Activated CD4-positive, alpha-beta memory T cell treated with anti-CD3 and anti-CD28 coated beads, Interleukin-2, amount 10 ng/mL, durations not matched to agents 7 days and 5 days (primary cell): ENCODE measurements at regions of chr19 and their contacts with region 1.

Region 1: DNA sequence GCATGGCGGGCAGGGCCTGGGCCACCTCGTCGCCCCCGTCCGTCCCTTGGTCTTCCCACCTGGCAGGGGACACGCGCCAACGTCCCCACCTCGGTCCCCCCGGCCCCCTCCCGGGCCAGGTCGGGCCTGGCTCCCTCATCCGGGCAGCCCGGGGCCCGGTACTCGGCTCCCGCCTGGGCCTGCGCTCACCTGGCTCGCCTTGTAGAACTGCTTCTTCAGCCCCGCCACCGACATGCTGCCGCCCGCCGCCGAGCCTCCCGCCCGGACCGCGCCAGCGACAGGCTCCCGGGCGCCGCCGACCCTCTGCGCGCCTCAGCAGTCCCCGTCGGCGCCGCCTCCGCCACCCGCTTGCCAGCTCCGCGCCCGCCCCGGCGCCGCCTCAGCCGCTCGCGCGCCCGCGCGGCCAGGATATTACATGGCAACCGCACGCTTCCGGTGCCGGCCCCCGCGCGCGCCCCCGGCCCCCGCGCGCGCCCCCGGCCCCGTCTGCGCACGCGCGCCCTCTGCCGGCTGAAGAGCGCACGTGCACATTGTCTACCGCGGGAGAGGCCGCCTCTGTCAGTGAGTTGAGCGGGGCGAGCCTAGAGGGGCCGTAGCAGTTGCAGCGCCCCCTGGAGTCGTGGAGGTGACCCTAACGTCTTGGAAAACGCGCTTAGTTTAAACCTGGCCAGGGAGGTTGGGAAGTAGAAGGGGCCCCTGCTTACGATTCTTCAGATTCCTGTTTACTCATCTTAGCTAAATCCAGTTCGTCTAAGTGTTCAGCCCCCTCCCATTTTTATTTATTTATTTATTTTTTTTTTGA is at the start of gene SH3GL1:
- DNase-seq: peak; percentile 94
- H3K4me3 Mint-ChIP-seq: peak within 1 kb of the TSS; percentile 93
- H3K27ac Mint-ChIP-seq: peak within 1 kb of the TSS; percentile 92
- H3K4me1 Mint-ChIP-seq: peaks cover 70% of the 10 kb centered on the region
- H3K27me3 Mint-ChIP-seq: no peaks in the 10 kb centered on the region
- total RNA-seq, gene SH3GL1: 62.1 to 64.0 TPM

Region 2: GRCh38 chr19:4267101-4267900 is 133.0 kb before region 1 on chr19:
- CTCF ChIA-PET with region 1: interaction called, 7 read pairs
- POLR2A ChIA-PET with region 1: interaction called, 11 read pairs
- DNase-seq: peak; percentile 66
- H3K4me3 Mint-ChIP-seq: no peak overlapping the region
- H3K27ac Mint-ChIP-seq: no peak overlapping the region
- H3K4me1 Mint-ChIP-seq: peaks cover 18% of the 10 kb centered on the region
- H3K27me3 Mint-ChIP-seq: no peaks in the 10 kb centered on the region

Region 3: GRCh38 chr19:4369888-4370260 is 30.5 kb before region 1 on chr19:
- CTCF ChIA-PET with region 1: interaction called, 36 read pairs
- POLR2A ChIA-PET with region 1: interaction called, 20 read pairs
- DNase-seq: peak; percentile 82
- H3K4me3 Mint-ChIP-seq: peak overlapping the region; percentile 73
- H3K27ac Mint-ChIP-seq: peak overlapping the region; percentile 97
- H3K4me1 Mint-ChIP-seq: peaks cover 61% of the 10 kb centered on the region
- H3K27me3 Mint-ChIP-seq: no peaks in the 10 kb centered on the region

Region 4: GRCh38 chr19:4415352-4415751 is 15.0 kb after region 1 on chr19:
- CTCF ChIA-PET with region 1: interaction called, 3 read pairs
- POLR2A ChIA-PET with region 1: interaction called, 22 read pairs
- DNase-seq: no peak
- H3K4me3 Mint-ChIP-seq: no peak overlapping the region
- H3K27ac Mint-ChIP-seq: no peak overlapping the region
- H3K4me1 Mint-ChIP-seq: no peaks in the 10 kb centered on the region
- H3K27me3 Mint-ChIP-seq: no peaks in the 10 kb centered on the region

Region 5: DNA sequence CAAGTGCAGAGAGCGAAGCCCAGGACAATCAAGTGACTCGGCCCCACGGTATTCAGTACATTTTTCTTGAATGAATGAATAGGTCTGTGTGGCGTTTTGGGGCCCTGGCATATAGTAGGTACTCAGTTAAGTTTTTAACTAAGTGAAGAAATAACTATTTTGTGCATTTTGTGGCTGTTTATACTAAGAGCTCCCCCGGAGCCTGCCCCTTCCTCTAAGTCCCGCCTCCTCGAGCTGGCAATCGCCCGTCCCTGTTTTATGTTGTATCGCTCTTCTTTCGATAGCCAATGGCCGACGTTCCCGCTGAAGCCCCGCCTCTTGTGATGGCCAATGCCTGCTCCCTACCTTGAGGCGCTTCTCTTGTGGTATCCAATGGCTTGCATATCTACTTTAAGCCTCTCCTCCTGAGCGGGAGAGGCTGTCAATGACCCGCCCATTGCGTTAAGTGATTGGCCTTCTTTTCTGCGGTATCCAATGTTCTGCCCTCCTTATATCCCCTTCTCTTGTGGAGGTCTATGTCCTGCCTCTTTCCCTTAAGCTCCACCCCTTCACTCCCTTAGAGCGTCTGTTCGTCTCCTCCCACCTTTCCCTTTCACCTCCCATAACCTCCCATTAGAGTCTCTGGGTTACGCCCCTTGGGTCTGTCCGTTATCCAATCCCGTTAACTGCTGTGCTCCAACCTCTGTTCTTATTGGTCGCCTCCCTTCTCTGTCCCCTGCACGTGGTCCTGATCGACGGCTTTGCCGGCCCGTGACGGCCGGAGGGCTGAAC is 71.3 kb after region 1 on chr19:
- CTCF ChIA-PET with region 1: interaction called, 8 read pairs
- POLR2A ChIA-PET with region 1: interaction called, 15 read pairs
- DNase-seq: peak; percentile 98
- H3K4me3 Mint-ChIP-seq: no peak overlapping the region
- H3K27ac Mint-ChIP-seq: no peak overlapping the region
- H3K4me1 Mint-ChIP-seq: peaks cover 27% of the 10 kb centered on the region
- H3K27me3 Mint-ChIP-seq: no peaks in the 10 kb centered on the region

Region 6: GRCh38 chr19:4534836-4535658 is 134.7 kb after region 1 on chr19 and contains the start of gene PLIN5:
- CTCF ChIA-PET with region 1: no interaction called
- POLR2A ChIA-PET with region 1: no interaction called
- DNase-seq: no peak
- H3K4me3 Mint-ChIP-seq: no peak within 1 kb of the TSS
- H3K27ac Mint-ChIP-seq: no peak within 1 kb of the TSS
- H3K4me1 Mint-ChIP-seq: peaks cover 3% of the 10 kb centered on the region
- H3K27me3 Mint-ChIP-seq: peaks cover 9% of the 10 kb centered on the region
- total RNA-seq, gene PLIN5: not detected

Region 7: DNA sequence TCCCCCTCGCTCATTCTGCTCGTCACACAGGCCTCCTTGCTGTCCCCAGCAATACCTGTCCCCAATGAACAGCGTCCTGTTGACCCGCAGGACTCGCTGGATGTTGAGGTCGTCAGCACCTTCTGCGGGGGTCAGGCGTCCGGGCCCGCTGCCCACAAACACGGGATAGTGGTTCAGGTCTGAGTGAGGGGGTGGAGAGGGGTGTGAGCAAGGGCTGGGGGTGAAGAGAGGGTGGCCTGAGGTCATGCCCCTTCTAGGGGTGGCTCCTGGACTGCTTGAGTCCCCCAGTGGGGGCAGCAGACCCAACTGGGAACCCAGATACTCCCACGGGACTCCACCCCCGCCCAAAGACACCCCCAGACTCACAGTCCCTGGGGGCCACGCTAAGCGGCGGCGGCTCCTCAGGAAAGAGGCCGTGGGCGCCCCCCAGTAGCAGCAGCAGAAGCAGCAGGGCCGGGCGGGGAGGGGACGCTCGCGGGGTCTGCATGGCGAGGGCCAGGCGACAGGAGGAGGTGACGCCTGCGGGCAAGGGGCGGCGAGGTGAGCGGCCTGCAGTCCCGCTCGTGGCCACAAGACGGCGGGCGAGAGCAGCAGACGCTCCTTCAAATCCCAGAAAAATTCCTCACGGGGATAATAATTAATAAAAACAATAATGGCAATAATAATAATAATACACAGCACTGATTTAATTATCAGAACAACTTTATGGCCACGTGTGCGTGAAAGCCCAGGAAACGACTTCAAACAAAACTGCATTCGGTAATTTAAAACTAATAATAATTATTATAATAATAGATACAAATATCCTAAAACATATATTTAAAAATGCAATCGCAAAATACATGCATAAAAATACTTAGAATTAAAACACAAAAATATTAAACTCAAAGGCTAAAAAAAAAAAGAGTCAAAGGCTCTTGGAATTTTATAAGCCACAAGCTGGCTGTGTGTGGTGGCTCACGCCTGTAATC is 157.9 kb after region 1 on chr19:
- CTCF ChIA-PET with region 1: no interaction called
- POLR2A ChIA-PET with region 1: no interaction called
- DNase-seq: peak; percentile 36
- H3K4me3 Mint-ChIP-seq: no peak overlapping the region
- H3K27ac Mint-ChIP-seq: no peak overlapping the region
- H3K4me1 Mint-ChIP-seq: peaks cover 1% of the 10 kb centered on the region
- H3K27me3 Mint-ChIP-seq: no peaks in the 10 kb centered on the region